ENCODE measurements at regions of chr7 and their contacts with region 1.

Region 1: GRCh38 chr7:28926871-28927597 is 31.1 kb downstream of the TRIL start:
- DNase-seq: peak; percentile 83
- H3K4me3 ChIP-seq: peak overlapping the region; percentile 29 to 75 (median 70)
- H3K27ac ChIP-seq: no peak overlapping the region
- H3K4me1 ChIP-seq: no peaks in the 10 kb centered on the region
- H3K27me3 ChIP-seq: peaks cover 4 to 6% of the 10 kb centered on the region in 2 experiments
- CTCF ChIP-seq: peak; percentile 67 to 81
- POLR2A ChIP-seq: no peak

Region 2: DNA sequence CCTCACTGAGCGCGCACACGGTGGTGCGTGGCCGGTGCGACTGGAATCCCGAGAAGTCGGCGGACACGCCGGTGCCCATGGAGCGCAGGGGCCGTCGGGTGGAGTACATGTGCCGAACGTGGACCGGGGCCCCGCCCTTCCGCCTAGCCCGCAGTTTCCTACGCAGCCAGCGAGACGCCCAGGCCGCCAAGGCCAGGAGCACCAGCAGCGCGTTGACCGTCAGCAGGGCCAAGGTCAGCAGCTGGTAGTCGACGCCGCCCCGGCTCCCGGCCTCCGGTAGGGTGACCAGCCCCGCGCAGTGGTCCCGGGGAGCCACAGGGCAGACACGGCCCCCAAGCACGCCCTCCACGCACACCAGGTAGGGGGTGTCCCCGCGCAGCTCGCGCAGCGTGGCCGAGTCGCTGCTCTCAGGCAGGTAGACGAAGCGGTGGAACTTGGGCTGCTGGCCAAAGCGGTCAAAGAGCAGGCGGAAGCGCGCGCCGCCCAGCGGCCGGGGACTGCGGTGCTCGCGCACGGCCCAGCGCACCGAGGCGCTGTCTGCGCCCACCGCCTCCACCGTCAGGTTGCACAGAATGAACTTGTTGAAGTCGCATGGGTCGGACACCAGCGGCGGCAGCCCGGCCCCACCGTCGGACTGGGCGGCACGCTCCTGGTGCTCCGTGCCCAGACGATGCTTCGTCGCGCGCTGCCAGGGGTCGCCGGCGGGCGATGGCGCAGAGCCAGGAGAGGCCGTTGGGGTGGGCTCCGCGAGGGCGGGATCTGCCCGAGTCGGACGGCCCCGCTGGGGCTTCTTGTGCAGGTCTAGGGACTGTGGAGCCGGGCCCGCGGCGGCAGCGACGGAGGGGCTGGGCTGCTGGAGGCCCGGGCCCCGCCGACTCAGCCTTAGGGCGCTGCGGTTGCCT is 28.9 kb after region 1 on chr7:
- CTCF ChIA-PET with region 1: interaction called, 518 read pairs
- POLR2A ChIA-PET with region 1: interaction called, 4 read pairs
- dilution Hi-C with region 1: no loop called
- intact Hi-C with region 1: loop called (anchors 1 kb)
- DNase-seq: peak; percentile 57
- H3K4me3 ChIP-seq: peak overlapping the region in 2 of 3 experiments; percentile 13 to 16
- H3K27ac ChIP-seq: no peak overlapping the region
- H3K4me1 ChIP-seq: peaks cover 11% of the 10 kb centered on the region
- H3K27me3 ChIP-seq: peaks cover 18 to 26% of the 10 kb centered on the region in 2 experiments
- CTCF ChIP-seq: peak; percentile 77 to 86
- POLR2A ChIP-seq: no peak

Region 3: GRCh38 chr7:29078311-29079260 is 151.6 kb after region 1 on chr7:
- CTCF ChIA-PET with region 1: interaction called, 16 read pairs
- POLR2A ChIA-PET with region 1: no interaction called
- dilution Hi-C with region 1: no loop called
- intact Hi-C with region 1: no loop called
- DNase-seq: no peak
- H3K4me3 ChIP-seq: no peak overlapping the region
- H3K27ac ChIP-seq: no peak overlapping the region
- H3K4me1 ChIP-seq: no peaks in the 10 kb centered on the region
- H3K27me3 ChIP-seq: peaks cover 2 to 5% of the 10 kb centered on the region in 2 experiments
- CTCF ChIP-seq: no peak
- POLR2A ChIP-seq: no peak

Region 4: DNA sequence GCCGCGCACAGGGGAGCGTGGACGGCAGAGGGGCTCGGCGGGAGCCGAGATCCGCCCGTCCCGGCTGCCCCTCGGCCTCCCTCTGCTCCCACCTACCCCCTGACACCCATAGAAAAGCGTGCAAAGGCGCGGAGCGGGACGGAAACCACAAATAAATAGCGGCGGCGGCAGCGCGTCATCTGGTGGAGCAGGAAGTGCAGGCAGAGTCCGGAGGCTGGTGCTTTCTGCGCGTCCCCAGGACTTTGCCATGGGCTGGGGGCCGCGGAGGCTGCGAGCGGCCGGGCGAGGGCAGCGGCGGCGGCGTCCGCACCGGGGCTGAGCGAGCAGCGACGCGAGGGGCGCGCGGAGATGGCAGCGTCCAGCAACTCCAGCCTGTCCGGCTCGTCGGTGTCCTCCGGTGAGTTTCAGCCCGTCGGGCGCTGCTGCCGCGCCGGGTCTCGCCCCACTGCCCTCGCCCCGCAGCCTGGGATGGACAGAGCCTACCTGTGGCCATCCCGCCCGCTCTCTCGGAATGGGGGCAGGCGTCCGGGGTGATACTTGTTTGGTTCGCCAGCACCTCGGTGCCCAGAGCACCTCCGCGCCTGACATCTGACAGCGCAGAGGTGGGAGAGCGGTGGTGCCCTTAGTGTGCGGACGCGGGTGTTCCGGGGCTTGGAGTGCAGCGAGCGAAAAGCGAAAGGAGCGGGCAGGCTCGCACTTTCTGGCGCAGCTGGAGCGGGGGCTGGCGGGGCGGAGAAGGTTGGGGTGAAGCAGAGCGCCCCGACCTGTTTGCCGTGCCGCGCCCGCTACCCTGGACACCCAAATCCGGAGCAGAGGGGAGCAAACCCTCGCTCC is 267.8 kb after region 1 on chr7 and contains the start of gene CHN2:
- CTCF ChIA-PET with region 1: interaction called, 48 read pairs
- POLR2A ChIA-PET with region 1: no interaction called
- dilution Hi-C with region 1: no loop called
- intact Hi-C with region 1: loop called (anchors 2 kb)
- DNase-seq: peak; percentile 42
- H3K4me3 ChIP-seq: peak within 1 kb of the TSS; percentile 72 to 88 (median 74)
- H3K27ac ChIP-seq: no peak within 1 kb of the TSS
- H3K4me1 ChIP-seq: peaks cover 8% of the 10 kb centered on the region
- H3K27me3 ChIP-seq: peaks cover 18 to 33% of the 10 kb centered on the region in 2 experiments
- CTCF ChIP-seq: no peak
- POLR2A ChIP-seq: no peak
- total RNA-seq, gene CHN2: 3.2 and 5.0 TPM in 2 replicates

Region 5: GRCh38 chr7:29416938-29417305 is 489.9 kb after region 1 on chr7:
- CTCF ChIA-PET with region 1: interaction called, 234 read pairs
- POLR2A ChIA-PET with region 1: no interaction called
- dilution Hi-C with region 1: no loop called
- intact Hi-C with region 1: no loop called
- DNase-seq: no peak
- H3K4me3 ChIP-seq: no peak overlapping the region
- H3K27ac ChIP-seq: no peak overlapping the region
- H3K4me1 ChIP-seq: no peaks in the 10 kb centered on the region
- H3K27me3 ChIP-seq: no peaks in the 10 kb centered on the region
- CTCF ChIP-seq: no peak
- POLR2A ChIP-seq: no peak

Measured in endothelial cell of umbilical vein (primary cell).